ENCODE measurements at regions of chr10 and their contacts with region 1.

Region 1: GRCh38 chr10:110443239-110444003 is 54.3 kb upstream of the DUSP5 start:
- DNase-seq: peak; percentile 7
- H3K4me3 Mint-ChIP-seq: no peak overlapping the region
- H3K27ac Mint-ChIP-seq: no peak overlapping the region
- H3K4me1 Mint-ChIP-seq: peaks cover 9% of the 10 kb centered on the region
- H3K27me3 Mint-ChIP-seq: no peaks in the 10 kb centered on the region

Region 2: DNA sequence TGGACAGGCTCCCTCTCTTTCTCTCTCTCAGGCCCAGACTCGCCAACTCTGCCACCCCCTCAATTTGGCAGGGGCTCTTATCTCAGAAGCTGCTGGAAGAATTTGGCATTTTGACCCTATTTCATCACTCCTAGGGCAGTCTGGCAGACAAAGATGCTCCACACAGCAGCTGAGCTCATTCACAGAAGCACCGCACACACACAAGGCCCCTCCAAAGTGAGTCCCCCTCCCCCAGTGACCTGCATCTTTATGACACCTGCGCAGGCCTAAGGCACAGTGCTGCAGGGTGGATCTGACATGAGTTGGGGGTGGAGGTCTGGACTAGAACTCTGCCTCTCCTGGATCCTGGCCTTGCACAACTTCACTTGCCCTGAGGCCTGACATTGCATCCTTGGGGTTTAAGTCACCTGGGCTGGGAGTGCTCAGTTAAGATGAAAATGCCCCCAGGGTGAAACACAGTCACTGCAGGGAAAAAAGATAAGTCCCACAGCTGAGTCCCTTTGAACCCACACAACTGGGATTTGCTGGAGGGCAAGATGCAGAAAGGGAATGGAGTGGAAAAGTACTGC is 13.2 kb after region 1 on chr10:
- CTCF ChIA-PET with region 1: interaction called, 3 read pairs
- POLR2A ChIA-PET with region 1: no interaction called
- intact Hi-C with region 1: loop called (anchors 2 kb)
- DNase-seq: no peak
- H3K4me3 Mint-ChIP-seq: no peak overlapping the region
- H3K27ac Mint-ChIP-seq: no peak overlapping the region
- H3K4me1 Mint-ChIP-seq: peaks cover 56% of the 10 kb centered on the region
- H3K27me3 Mint-ChIP-seq: no peaks in the 10 kb centered on the region

Region 3: GRCh38 chr10:110528224-110528997 is 85.0 kb after region 1 on chr10:
- CTCF ChIA-PET with region 1: no interaction called
- POLR2A ChIA-PET with region 1: no interaction called
- intact Hi-C with region 1: no loop called
- DNase-seq: peak; percentile 25
- H3K4me3 Mint-ChIP-seq: no peak overlapping the region
- H3K27ac Mint-ChIP-seq: peak overlapping the region; percentile 85
- H3K4me1 Mint-ChIP-seq: peaks cover 66% of the 10 kb centered on the region
- H3K27me3 Mint-ChIP-seq: no peaks in the 10 kb centered on the region

Measured in activated CD4-positive, alpha-beta memory T cell treated with anti-CD3 and anti-CD28 coated beads for 36 hours (primary cell).